ENCODE measurements at regions of chr1 and their contacts with region 1.

Region 1: DNA sequence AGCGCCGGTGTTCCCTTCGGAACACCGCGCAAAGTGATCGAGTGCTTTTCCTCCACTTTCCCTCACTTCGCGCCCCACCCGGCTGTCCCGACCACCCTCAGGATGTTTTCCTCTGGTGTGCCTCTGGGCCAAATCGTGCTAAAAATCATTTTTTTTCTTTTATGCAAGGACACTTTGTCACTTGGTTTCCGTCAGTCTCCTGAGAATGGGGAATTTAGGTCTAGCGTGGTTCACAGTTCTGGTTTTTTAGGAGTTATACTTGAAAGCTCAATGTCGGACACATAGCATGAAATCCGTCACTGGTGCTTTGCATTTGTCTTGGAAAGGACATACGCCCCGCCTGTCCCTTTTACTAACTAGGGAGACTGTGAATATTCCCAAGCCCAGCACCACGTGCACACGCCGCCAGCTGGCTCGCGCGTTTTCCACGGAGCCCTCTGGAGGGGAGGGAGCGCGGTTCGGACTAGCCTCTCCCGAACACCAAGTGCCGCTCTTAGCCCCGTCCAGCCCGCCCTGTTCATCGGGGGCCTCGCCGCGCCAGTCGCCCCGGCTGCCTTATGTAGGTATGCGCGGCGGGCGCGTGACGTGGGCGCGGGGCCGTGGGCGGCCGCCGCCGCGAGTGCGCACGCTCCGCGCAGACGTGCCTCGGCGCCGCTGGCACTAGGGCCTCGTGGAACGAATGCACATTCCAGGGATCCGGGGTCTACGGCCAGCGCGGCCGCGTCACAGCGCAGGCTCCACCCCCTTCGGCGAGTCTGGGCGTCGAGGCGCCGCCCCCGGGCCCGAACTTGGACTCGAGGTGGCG is 572 bp upstream of the IRF2BP2 start:
- DNase-seq: peak; percentile 90 to 96
- ATAC-seq: peak; percentile 32 to 37
- H3K4me3 ChIP-seq: peak overlapping the region; percentile 67 to 78 (median 72)
- H3K27ac ChIP-seq: peak overlapping the region; percentile 98 to 99 (median 98)
- H3K4me1 ChIP-seq: peaks cover 30 to 52% of the 10 kb centered on the region in 2 donors
- H3K27me3 ChIP-seq: no peaks in the 10 kb centered on the region
- CTCF ChIP-seq: peak in 2 of 5 experiments; percentile 25 to 35
- POLR2A ChIP-seq: peak in 1 of 2 donors; percentile 99

Region 2: DNA sequence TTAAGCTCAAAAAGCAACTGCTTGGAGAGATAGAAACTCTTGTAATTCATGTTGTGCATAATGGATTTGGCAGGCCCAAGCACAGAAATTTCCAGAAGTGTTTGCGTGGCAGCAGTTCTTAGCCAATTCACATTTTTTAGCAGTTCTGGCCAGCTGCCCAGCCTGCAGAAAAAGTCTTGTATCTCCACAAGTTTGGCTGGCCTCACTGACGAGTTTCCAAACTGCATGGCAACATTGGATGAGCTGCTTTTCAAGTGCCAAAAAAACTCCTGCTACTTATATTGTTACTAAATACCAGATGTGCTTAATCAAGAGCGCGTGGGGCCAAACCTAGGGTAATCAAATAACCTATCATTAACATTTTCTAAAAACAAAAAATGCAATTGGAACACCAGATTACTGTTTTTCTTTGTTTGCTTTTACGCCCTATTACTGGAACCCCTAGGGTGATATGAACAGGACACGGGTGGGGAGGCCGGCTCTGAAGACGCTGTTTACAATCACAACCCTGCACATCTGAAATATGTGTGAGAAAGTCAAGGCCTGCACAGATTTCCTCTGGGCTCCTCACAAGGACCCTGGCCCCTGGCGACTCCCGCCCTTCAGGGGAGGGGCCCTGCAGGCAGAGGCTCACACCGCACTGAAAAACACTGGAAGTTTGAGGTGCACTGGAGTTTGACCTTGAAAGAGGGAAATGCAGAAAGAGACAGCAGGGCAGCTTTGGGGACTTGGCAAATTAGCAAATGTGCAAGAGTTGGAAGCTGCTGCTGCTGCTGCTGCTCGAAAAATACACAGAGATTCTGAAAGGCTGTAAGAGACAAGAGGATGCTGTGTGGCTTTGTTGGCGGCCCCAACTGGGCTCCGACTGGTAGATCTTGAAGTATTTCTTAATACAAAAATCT is 76.3 kb before region 1 on chr1:
- in situ Hi-C with region 1: no loop called
- intact Hi-C with region 1: loop called (anchors 1 kb)
- DNase-seq: peak; percentile 79 to 89
- ATAC-seq: no peak
- H3K4me3 ChIP-seq: no peak overlapping the region
- H3K27ac ChIP-seq: peak overlapping the region; percentile 93 to 100 (median 98)
- H3K4me1 ChIP-seq: peaks cover 98% of the 10 kb centered on the region in 2 donors
- H3K27me3 ChIP-seq: no peaks in the 10 kb centered on the region
- CTCF ChIP-seq: no peak
- POLR2A ChIP-seq: no peak

Region 3: DNA sequence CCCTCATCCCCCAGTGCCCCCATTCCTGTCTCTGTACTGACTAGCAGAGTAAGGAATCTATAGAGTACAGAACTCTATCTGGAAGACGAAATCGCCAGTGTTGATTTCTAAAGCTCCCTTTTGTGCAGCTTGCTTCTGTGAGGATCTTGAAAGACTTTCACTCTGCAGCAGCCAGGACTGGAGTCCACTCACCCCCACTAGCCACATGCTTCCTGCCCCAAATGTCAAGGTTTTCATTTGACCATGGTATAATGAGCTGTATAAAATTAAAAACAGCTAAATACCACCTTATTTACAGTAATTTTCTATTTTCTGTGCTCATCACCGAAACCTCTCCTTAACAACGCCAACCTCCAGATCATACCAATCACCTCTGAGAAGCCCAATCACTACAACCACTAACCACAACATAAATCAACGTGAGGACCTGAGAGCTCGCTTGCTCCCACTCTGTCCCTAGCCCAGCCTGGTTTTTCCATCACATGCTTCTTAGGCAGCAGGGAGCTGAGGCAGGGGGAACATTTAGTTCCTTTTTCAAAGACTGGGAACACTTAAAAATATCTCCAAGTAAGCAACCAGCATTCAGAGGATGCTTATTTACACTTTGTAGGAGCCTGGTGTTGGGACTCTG is 55.5 kb after region 1 on chr1:
- in situ Hi-C with region 1: no loop called
- intact Hi-C with region 1: no loop called
- DNase-seq: no peak
- ATAC-seq: peak in 1 of 2 donors; percentile 56
- H3K4me3 ChIP-seq: no peak overlapping the region
- H3K27ac ChIP-seq: no peak overlapping the region
- H3K4me1 ChIP-seq: no peaks in the 10 kb centered on the region
- H3K27me3 ChIP-seq: no peaks in the 10 kb centered on the region
- CTCF ChIP-seq: no peak
- POLR2A ChIP-seq: no peak

Region 4: GRCh38 chr1:234722904-234723720 is 112.6 kb after region 1 on chr1:
- in situ Hi-C with region 1: loop called in 1 of 4 experiments (anchors 5 kb)
- intact Hi-C with region 1: loop called (anchors 1 kb)
- DNase-seq: peak in 1 of 2 donors; percentile 73
- ATAC-seq: peak; percentile 6 to 11
- H3K4me3 ChIP-seq: peak overlapping the region; percentile 5 to 27 (median 10)
- H3K27ac ChIP-seq: peak overlapping the region; percentile 93 to 98 (median 96)
- H3K4me1 ChIP-seq: peaks cover 95 to 96% of the 10 kb centered on the region in 2 donors
- H3K27me3 ChIP-seq: no peaks in the 10 kb centered on the region
- CTCF ChIP-seq: no peak
- POLR2A ChIP-seq: no peak

Region 5: GRCh38 chr1:234887016-234887900 is 276.7 kb after region 1 on chr1:
- in situ Hi-C with region 1: loop called (anchors 5 to 25 kb)
- intact Hi-C with region 1: loop called (anchors 1 kb)
- DNase-seq: peak; percentile 59 to 82
- ATAC-seq: peak; percentile 48 to 57
- H3K4me3 ChIP-seq: peak overlapping the region in 3 of 4 donors; percentile 3 to 42 (median 18)
- H3K27ac ChIP-seq: peak overlapping the region; percentile 90 to 100 (median 96)
- H3K4me1 ChIP-seq: peaks cover 36 to 38% of the 10 kb centered on the region in 2 donors
- H3K27me3 ChIP-seq: no peaks in the 10 kb centered on the region
- CTCF ChIP-seq: no peak
- POLR2A ChIP-seq: peak in 1 of 2 donors; percentile 25

Region 6: GRCh38 chr1:234970731-234971476 is 360.4 kb after region 1 on chr1:
- in situ Hi-C with region 1: no loop called
- intact Hi-C with region 1: loop called (anchors 1 kb)
- DNase-seq: peak; percentile 83 to 93
- ATAC-seq: peak; percentile 84
- H3K4me3 ChIP-seq: peak overlapping the region; percentile 48 to 65 (median 55)
- H3K27ac ChIP-seq: peak overlapping the region; percentile 87 to 94 (median 90)
- H3K4me1 ChIP-seq: peaks cover 58 to 59% of the 10 kb centered on the region in 2 donors
- H3K27me3 ChIP-seq: no peaks in the 10 kb centered on the region
- CTCF ChIP-seq: no peak
- POLR2A ChIP-seq: peak; percentile 56 to 75

Region 7: GRCh38 chr1:234997201-234997895 is 386.8 kb after region 1 on chr1:
- in situ Hi-C with region 1: loop called in 1 of 4 experiments (anchors 10 kb)
- intact Hi-C with region 1: loop called (anchors 2 kb)
- DNase-seq: peak; percentile 99 to 100
- ATAC-seq: peak; percentile 88 to 93
- H3K4me3 ChIP-seq: peak overlapping the region in 3 of 4 donors; percentile 12 to 24 (median 18)
- H3K27ac ChIP-seq: peak overlapping the region; percentile 93 to 99 (median 94)
- H3K4me1 ChIP-seq: peaks cover 25 to 28% of the 10 kb centered on the region in 2 donors
- H3K27me3 ChIP-seq: no peaks in the 10 kb centered on the region
- CTCF ChIP-seq: peak in 1 of 5 experiments; percentile 11
- POLR2A ChIP-seq: peak; percentile 59 to 73

Region 8: GRCh38 chr1:235075188-235075926 is 464.8 kb after region 1 on chr1:
- in situ Hi-C with region 1: loop called in 3 of 4 experiments (anchors 5 kb)
- intact Hi-C with region 1: loop called (anchors 1 kb)
- DNase-seq: peak; percentile 83 to 91
- ATAC-seq: peak; percentile 4 to 14
- H3K4me3 ChIP-seq: peak overlapping the region in 3 of 4 donors; percentile 10 to 34 (median 32)
- H3K27ac ChIP-seq: peak overlapping the region; percentile 87 to 100 (median 95)
- H3K4me1 ChIP-seq: peaks cover 77 to 82% of the 10 kb centered on the region in 2 donors
- H3K27me3 ChIP-seq: no peaks in the 10 kb centered on the region
- CTCF ChIP-seq: no peak
- POLR2A ChIP-seq: peak; percentile 80 to 85

Measured in gastrocnemius medialis (tissue), 4 donors.